AG04450 (cell line): ENCODE measurements at regions of chr3 and their contacts with region 1.

Region 1: GRCh38 chr3:66138336-66139313 is 82.2 kb upstream of the SLC25A26 start:
- DNase-seq: no peak
- H3K4me3 ChIP-seq: no peak overlapping the region
- H3K27ac ChIP-seq: no peak overlapping the region
- H3K27me3 ChIP-seq: no peaks in the 10 kb centered on the region
- CTCF ChIP-seq: peak; percentile 87

Region 2: GRCh38 chr3:65995030-65995429 is 143.6 kb before region 1 on chr3:
- CTCF ChIA-PET with region 1: interaction called, 23 read pairs
- POLR2A ChIA-PET with region 1: no interaction called
- DNase-seq: no peak
- H3K4me3 ChIP-seq: no peak overlapping the region
- H3K27ac ChIP-seq: no peak overlapping the region
- H3K27me3 ChIP-seq: no peaks in the 10 kb centered on the region
- CTCF ChIP-seq: no peak

Region 3: GRCh38 chr3:66098436-66098835 is 40.2 kb before region 1 on chr3:
- CTCF ChIA-PET with region 1: interaction called, 11 read pairs
- POLR2A ChIA-PET with region 1: no interaction called
- DNase-seq: peak; percentile 59
- H3K4me3 ChIP-seq: no peak overlapping the region
- H3K27ac ChIP-seq: no peak overlapping the region
- H3K27me3 ChIP-seq: no peaks in the 10 kb centered on the region
- CTCF ChIP-seq: no peak